HCT116 (cell line): ENCODE measurements at regions of chr6 and their contacts with region 1.

Region 1: GRCh38 chr6:73515204-73515655 is 5.6 kb downstream of the EEF1A1 start:
- DNase-seq: no peak
- ATAC-seq: peak; percentile 7
- H3K4me3 ChIP-seq: no peak overlapping the region
- H3K27ac ChIP-seq: peak overlapping the region; percentile 50; the same call in 1 of the 2 replicates
- H3K4me1 ChIP-seq: peaks cover 6 to 46% of the 10 kb centered on the region in 2 experiments; a peak in 3 of 4 replicates
- H3K27me3 ChIP-seq: no peaks in the 10 kb centered on the region
- CTCF ChIP-seq: no peak
- POLR2A ChIP-seq: no peak
- RAD21 ChIP-seq: no peak

Region 2: GRCh38 chr6:73461537-73462350 is 53.5 kb before region 1 on chr6 and contains the start of gene MTO1:
- CTCF ChIA-PET with region 1: interaction called, 3 read pairs
- POLR2A ChIA-PET with region 1: interaction called, 10 read pairs
- RAD21 ChIA-PET with region 1: no interaction called
- intact Hi-C with region 1: no loop called
- DNase-seq: peak; percentile 84
- ATAC-seq: peak; percentile 93
- H3K4me3 ChIP-seq: peak within 1 kb of the TSS; percentile 83 to 98
- H3K27ac ChIP-seq: peak within 1 kb of the TSS; percentile 97
- H3K4me1 ChIP-seq: peaks cover 0 to 10% of the 10 kb centered on the region in 2 experiments; a peak in 1 of 4 replicates
- H3K27me3 ChIP-seq: no peaks in the 10 kb centered on the region
- CTCF ChIP-seq: no peak
- POLR2A ChIP-seq: peak; percentile 75
- RAD21 ChIP-seq: no peak
- total RNA-seq, gene MTO1: 40.1 TPM

Region 3: DNA sequence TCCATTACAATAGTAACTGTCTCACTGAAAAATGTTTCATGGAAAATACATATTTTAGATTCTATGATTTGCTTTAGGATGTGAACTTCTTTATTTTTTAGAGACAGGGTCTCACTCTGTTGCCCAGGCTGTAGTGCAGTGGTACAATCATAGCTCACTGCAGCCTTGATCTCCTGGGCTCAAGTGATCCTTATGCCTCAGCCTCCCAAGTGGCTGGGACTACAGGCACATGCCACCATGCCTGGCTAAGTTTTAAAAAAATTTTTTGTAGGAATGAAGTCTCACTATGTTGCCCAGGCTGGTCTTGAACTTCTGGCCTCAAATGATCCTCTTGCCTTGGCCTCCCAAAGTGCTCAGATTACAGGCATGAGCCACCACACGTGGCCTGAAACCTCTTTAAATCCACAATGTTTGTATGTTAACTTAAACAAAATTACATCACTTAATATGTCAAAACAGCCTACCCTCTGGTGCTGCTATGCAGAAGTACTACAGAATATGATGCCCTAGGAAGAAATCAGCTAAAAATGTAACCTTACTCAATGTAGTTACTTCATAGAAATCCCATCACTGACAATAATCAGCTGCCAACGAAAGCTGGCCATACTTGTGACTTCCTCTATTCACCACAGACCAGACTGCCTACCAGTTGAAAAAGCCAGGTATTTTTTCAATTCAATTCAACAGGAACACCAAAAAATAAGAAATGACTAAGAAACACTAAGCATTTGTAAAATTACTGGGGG is 12.0 kb before region 1 on chr6:
- CTCF ChIA-PET with region 1: no interaction called
- POLR2A ChIA-PET with region 1: interaction called, 17 read pairs
- RAD21 ChIA-PET with region 1: no interaction called
- intact Hi-C with region 1: no loop called
- DNase-seq: no peak
- ATAC-seq: no peak
- H3K4me3 ChIP-seq: no peak overlapping the region
- H3K27ac ChIP-seq: no peak overlapping the region
- H3K4me1 ChIP-seq: no peaks in the 10 kb centered on the region
- H3K27me3 ChIP-seq: no peaks in the 10 kb centered on the region
- CTCF ChIP-seq: no peak
- POLR2A ChIP-seq: no peak
- RAD21 ChIP-seq: no peak

Region 4: DNA sequence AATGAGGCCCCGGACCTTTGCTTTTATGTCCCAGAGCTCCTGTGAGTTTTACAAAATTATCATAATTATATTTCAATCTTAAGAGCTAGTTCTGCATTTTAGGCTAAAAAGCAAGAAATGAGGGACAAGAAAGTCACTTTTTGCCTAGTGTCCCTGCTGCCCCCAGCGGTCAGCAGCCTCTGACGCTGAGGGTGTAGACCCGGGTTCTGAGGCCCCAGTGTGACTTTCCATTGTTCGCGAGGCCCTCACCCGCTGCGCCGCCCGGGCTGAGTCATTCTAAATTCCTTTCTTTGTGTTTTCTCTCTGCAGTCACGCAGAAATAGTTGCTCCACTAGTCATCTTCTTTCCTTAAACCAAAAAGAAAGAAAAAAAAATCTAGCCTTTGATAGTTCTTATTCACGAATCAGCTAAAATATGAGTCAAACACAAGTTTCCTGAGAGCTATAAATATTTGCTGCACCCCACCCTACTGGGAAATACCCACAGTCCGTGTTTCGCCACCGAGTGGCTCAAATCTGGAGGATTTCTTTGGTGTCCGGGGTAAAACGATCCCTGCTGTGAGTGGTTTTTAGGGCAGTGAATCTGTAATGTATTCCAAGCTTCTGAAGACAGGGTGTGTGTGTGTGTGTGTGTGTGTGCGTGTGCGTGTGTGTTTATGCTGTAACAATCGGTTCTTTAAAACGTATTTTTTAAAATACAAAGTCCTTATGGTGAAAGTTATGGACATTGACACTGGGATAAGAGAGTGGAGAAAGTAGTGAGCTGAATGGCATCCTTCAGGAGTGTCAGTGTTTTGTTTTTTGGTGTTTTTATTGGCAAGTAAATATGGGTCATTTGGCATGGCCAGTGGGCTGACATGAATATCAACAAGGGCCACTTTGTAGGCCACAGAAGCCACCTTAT is 65.3 kb after region 1 on chr6:
- CTCF ChIA-PET with region 1: no interaction called
- POLR2A ChIA-PET with region 1: interaction called, 68 read pairs
- RAD21 ChIA-PET with region 1: interaction called, 4 to 5 read pairs
- intact Hi-C with region 1: no loop called
- DNase-seq: peak; percentile 96
- ATAC-seq: peak; percentile 82
- H3K4me3 ChIP-seq: peak overlapping the region; percentile 37 to 52
- H3K27ac ChIP-seq: peak overlapping the region; percentile 97
- H3K4me1 ChIP-seq: peaks cover 59% of the 10 kb centered on the region in 2 experiments
- H3K27me3 ChIP-seq: no peaks in the 10 kb centered on the region
- CTCF ChIP-seq: peak in 2 of 3 experiments; percentile 62 to 67; a peak in 4 of 6 replicates
- POLR2A ChIP-seq: peak; percentile 45
- RAD21 ChIP-seq: peak; percentile 52; the same call in 1 of the 2 replicates

Region 5: DNA sequence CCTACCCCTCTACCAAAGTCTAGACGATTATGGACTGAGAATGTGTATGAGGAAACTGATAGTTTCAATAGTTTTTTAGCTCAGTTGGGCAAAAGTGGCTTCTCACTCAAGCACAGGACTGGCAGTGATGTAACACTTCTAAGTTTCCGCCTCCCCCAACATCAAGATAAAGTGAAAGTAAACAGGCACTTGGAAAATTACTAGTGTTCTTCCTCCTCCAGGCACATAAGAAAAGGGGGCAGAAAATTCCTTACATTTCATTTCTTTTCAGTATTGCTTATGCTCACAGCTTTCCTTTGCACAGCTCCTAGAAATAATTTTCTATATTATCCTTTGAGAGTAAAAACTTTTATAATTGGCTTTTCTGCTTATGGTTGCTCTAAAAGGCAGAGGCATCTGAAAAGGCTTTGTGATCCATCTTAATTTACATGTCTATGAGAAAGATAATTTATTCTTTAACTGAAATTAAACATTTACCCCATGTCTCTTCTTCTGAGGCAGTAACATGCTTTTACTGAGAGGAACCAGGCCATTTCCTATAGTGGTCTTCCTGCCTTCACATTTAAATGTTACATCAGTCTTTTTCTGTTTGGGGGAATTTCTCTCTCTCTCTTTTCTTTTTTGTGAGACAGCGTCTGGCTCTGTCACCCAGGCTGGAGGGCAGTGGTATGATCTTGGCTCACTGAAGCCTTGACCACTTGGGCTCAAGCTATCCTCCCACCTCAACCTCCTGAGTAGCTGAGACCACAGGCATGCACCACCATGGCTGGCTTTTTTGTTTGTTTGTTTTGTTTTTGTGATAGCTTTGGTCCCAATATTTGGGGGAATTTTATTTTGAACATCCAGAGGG is 70.6 kb after region 1 on chr6:
- CTCF ChIA-PET with region 1: no interaction called
- POLR2A ChIA-PET with region 1: interaction called, 68 read pairs
- RAD21 ChIA-PET with region 1: interaction called, 4 to 5 read pairs
- intact Hi-C with region 1: no loop called
- DNase-seq: peak; percentile 72
- ATAC-seq: peak; percentile 61
- H3K4me3 ChIP-seq: peak overlapping the region; percentile 30 to 39
- H3K27ac ChIP-seq: peak overlapping the region; percentile 95
- H3K4me1 ChIP-seq: peaks cover 46 to 50% of the 10 kb centered on the region in 2 experiments
- H3K27me3 ChIP-seq: no peaks in the 10 kb centered on the region
- CTCF ChIP-seq: no peak
- POLR2A ChIP-seq: no peak
- RAD21 ChIP-seq: no peak

Region 6: GRCh38 chr6:73610444-73611275 is 95.4 kb after region 1 on chr6:
- CTCF ChIA-PET with region 1: interaction called, 8 read pairs
- POLR2A ChIA-PET with region 1: interaction called, 26 read pairs
- RAD21 ChIA-PET with region 1: no interaction called
- intact Hi-C with region 1: loop called (anchors 2 kb)
- DNase-seq: peak; percentile 18
- ATAC-seq: peak; percentile 73
- H3K4me3 ChIP-seq: no peak overlapping the region
- H3K27ac ChIP-seq: peak overlapping the region; percentile 11; the same call in 1 of the 2 replicates
- H3K4me1 ChIP-seq: peaks cover 0 to 9% of the 10 kb centered on the region in 2 experiments; a peak in 1 of 4 replicates
- H3K27me3 ChIP-seq: no peaks in the 10 kb centered on the region
- CTCF ChIP-seq: peak; percentile 40 to 69 (median 60)
- POLR2A ChIP-seq: no peak
- RAD21 ChIP-seq: peak; percentile 86